ENCODE measurements at regions of chr12 and their contacts with region 1.

Region 1: GRCh38 chr12:65881965-65882413 is 57.7 kb downstream of the HMGA2 start:
- DNase-seq: peak; percentile 91
- H3K4me3 ChIP-seq: peak overlapping the region in 2 of 3 experiments; percentile 0 to 16
- H3K27ac ChIP-seq: peak overlapping the region; percentile 70
- H3K4me1 ChIP-seq: peaks cover 93% of the 10 kb centered on the region
- H3K27me3 ChIP-seq: no peaks in the 10 kb centered on the region
- CTCF ChIP-seq: peak; percentile 32 to 53
- POLR2A ChIP-seq: no peak

Region 2: GRCh38 chr12:65536876-65537661 is 344.9 kb before region 1 on chr12:
- CTCF ChIA-PET with region 1: interaction called, 3 read pairs
- POLR2A ChIA-PET with region 1: no interaction called
- dilution Hi-C with region 1: no loop called
- intact Hi-C with region 1: loop called (anchors 5 kb)
- DNase-seq: peak; percentile 94
- H3K4me3 ChIP-seq: no peak overlapping the region
- H3K27ac ChIP-seq: peak overlapping the region; percentile 98
- H3K4me1 ChIP-seq: peaks cover 58% of the 10 kb centered on the region
- H3K27me3 ChIP-seq: no peaks in the 10 kb centered on the region
- CTCF ChIP-seq: no peak
- POLR2A ChIP-seq: peak; percentile 45

Region 3: DNA sequence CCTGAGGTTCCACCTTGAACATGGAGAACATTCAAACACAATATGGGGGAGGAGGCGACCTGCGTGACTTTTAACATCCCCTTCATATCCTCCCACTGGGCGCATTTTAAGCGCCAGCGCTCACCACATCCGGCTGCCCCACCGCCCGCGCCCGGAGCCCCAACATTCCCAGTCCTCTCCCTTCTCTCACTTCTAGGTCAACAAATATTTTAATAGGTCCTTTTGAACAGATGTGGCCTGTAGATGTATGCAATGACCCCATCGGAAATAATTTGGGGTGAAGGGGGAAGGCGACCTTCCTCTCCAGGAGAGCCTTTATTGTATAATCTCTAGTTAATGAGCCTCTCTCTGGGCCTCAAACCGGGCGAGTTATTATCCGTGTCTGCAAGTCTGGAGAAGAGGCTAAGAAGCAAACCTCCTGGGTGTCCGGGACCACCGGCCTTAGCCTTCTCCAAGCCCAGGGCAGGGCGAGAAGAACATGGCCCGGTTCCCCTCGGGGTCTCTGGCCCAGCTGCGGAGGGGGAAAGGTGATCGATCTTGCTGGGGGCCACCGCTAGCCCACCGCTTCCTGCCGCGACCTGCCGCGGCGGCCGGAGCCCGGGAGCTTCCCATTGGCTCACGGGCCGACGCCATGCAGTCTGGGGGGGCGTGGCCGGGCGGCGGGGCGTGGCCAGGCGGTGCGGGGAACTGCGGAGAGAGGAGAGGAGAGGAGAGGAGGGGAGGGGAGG is 141.0 kb before region 1 on chr12:
- CTCF ChIA-PET with region 1: no interaction called
- POLR2A ChIA-PET with region 1: no interaction called
- dilution Hi-C with region 1: no loop called
- intact Hi-C with region 1: loop called (anchors 5 kb)
- DNase-seq: peak; percentile 82
- H3K4me3 ChIP-seq: peak overlapping the region; percentile 75 to 88 (median 81)
- H3K27ac ChIP-seq: peak overlapping the region; percentile 77
- H3K4me1 ChIP-seq: peaks cover 5% of the 10 kb centered on the region
- H3K27me3 ChIP-seq: no peaks in the 10 kb centered on the region
- CTCF ChIP-seq: no peak
- POLR2A ChIP-seq: no peak

Region 4: DNA sequence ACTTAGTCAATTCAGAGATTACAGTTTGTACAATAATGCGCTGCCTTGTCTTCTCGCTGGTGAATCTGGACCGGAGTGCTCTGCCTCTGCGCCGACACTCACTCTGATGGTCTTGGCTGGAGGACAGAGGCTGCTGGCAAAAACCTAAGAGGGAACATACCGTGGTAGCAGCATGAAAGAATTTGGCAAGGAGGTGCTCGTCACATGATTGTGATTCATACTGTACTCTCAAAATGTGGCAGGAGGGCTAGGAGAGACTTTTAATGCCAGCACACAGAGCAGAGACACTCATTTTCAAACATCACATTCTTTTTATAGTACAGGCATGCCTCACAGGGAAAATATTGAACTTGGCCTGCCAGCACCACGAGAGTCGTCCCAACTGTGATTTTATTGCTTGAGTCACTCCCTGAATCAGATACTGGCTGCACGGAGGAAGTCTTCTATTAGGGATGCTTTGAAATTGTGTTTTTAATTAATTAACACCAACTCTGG is 10.0 kb after region 1 on chr12:
- CTCF ChIA-PET with region 1: interaction called, 11 read pairs
- POLR2A ChIA-PET with region 1: no interaction called
- dilution Hi-C with region 1: no loop called
- intact Hi-C with region 1: no loop called
- DNase-seq: peak; percentile 91
- H3K4me3 ChIP-seq: peak overlapping the region in 1 of 3 experiments; percentile 17
- H3K27ac ChIP-seq: peak overlapping the region; percentile 96
- H3K4me1 ChIP-seq: peaks cover 45% of the 10 kb centered on the region
- H3K27me3 ChIP-seq: no peaks in the 10 kb centered on the region
- CTCF ChIP-seq: no peak
- POLR2A ChIP-seq: peak; percentile 55

Region 5: DNA sequence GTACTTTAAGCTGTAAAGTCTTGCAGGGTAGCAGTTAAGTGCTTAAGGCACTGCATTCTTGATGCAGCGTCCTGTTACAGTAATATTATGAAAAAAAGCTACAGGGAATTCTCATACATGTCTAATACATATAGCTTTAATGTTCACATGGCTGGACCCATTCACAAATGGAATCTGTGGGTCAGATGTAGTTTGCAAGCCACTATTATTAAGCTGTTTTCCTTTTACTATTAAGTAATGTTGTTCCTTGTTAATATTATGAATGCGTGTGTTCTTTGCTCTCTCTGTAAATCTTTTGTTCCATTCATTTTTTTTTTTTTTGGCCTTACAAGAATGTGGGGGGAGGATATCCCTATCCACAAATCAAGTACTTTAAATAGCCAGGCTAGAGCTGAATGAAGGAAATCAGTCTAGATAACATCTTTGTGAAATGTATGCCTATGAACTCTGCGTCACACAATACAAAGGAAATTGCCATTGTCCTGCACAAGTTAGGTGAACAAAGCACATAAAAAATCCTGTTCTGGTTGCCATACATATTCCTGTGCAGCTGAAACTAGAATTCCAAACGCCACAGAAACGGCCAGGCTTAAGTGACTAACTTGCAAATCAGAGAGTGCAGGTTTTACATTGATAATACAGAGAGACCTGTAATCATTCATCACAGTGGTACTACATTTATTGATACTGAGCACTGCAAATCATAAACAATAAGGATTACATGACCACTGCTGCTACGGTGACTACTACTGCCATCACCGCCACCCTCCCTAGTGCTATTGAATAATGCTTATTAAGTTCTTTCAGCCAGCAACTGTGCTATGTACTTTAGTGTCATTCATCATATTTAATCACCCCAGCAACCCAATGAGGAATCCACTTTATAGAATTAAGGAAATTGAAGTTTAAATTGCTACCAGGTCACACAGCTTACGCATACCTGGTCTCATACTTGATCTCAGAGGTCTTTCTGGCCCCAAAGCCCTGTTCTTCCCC is 54.2 kb after region 1 on chr12:
- CTCF ChIA-PET with region 1: interaction called, 13 read pairs
- POLR2A ChIA-PET with region 1: no interaction called
- dilution Hi-C with region 1: no loop called
- intact Hi-C with region 1: loop called (anchors 1 kb)
- DNase-seq: peak; percentile 97
- H3K4me3 ChIP-seq: peak overlapping the region in 1 of 3 experiments; percentile 22
- H3K27ac ChIP-seq: peak overlapping the region; percentile 96
- H3K4me1 ChIP-seq: peaks cover 80% of the 10 kb centered on the region
- H3K27me3 ChIP-seq: no peaks in the 10 kb centered on the region
- CTCF ChIP-seq: no peak
- POLR2A ChIP-seq: peak; percentile 52

Region 6: DNA sequence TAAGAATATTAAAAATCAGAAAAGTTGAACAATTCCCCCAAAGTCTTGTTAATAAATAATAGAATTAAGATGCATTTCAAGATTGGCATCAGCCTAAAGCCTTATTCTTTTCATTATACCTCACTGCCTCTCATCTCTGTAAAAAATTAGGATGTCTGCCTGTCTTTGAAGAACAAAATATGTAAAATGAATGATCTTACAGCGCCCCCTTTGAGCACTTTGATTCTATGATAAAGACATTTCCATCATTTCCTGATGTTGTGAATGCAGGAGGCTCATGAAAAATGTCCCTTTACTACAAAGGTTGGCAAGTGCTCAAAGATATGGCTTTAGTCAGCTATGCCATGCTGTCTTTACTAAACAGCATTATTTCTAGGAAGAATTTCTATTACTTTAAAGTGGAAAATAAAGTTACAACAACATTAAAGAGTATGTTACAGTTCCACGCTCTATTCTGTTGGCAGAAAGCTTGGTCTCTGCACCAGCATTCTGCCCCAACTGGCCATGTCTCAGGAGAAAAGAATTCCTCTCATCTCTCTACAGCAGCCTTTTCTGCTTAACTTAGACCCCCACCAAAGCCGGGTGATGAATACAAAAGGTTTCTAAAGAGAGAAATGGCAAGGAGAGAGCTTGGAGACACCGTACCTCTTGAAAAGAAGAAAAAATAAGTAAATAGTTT is 153.4 kb after region 1 on chr12:
- CTCF ChIA-PET with region 1: interaction called, 3 read pairs
- POLR2A ChIA-PET with region 1: no interaction called
- dilution Hi-C with region 1: no loop called
- intact Hi-C with region 1: loop called (anchors 5 kb)
- DNase-seq: peak; percentile 71
- H3K4me3 ChIP-seq: no peak overlapping the region
- H3K27ac ChIP-seq: no peak overlapping the region
- H3K4me1 ChIP-seq: peaks cover 10% of the 10 kb centered on the region
- H3K27me3 ChIP-seq: peaks cover 1 to 3% of the 10 kb centered on the region in 2 experiments
- CTCF ChIP-seq: peak; percentile 26 to 35
- POLR2A ChIP-seq: no peak

Measured in endothelial cell of umbilical vein (primary cell).